ENCODE measurements at regions of chr4 and their contacts with region 1.

Region 1: DNA sequence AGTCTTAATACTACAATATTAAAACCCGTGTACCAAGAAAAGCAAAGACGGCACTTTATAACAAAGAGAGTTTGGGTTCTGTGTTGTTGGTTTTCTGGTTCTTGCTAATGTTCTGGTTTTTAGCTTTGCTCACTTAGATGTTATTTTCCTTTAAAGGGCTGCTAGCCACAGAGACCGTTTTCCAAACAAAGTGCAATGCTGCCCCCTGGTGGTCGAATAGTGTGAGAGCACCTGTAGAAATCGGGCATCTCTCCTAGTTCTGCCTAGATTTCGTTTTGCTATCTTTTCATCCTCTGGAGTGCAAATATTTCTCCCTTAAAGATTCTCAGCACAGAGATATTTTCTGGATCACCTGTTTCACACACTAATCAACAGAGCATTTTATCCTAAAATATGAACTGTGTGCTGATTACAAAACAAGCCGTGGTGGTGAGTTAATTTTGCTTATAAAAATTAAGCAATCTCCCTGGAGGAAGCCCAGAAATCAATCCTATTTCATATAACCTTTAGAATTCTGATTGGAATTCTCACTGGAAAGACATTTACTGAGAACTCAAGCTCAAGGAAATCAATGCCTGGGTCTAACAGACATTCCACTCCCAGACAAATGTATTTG is 334.5 kb upstream of the NOCT start:
- DNase-seq: peak; percentile 11
- ATAC-seq: peak; percentile 88
- H3K4me3 ChIP-seq: no peak overlapping the region
- H3K27ac ChIP-seq: no peak overlapping the region
- H3K4me1 ChIP-seq: no peaks in the 10 kb centered on the region
- H3K27me3 ChIP-seq: peaks cover 0 to 1% of the 10 kb centered on the region in 2 experiments; a peak in 1 of 4 replicates
- CTCF ChIP-seq: peak; percentile 80 to 94 (median 87)
- EP300 ChIP-seq: no peak
- POLR2A ChIP-seq: no peak
- RAD21 ChIP-seq: peak; percentile 96

Region 2: DNA sequence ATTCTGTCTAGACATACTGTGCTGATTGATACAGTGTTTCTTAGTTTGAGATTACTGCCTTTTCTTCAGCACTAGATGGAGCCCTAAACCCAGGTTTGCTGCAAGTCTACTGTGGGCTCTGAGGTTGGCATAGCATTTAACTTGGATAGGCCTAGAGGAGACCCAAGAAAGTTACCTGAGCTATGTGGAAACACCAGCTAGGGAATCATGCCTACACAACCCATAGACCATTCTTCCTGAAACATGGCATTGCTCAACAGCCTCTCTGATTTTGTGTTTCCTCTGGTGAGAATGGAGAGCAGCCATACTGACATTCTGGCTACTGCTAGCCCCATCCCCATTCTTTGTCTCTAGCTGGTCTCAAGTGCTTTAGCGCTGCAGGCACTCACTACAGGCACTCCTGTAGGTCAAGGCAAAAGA is 861.1 kb before region 1 on chr4:
- CTCF ChIA-PET with region 1: interaction called, 21 read pairs
- POLR2A ChIA-PET with region 1: no interaction called
- RAD21 ChIA-PET with region 1: interaction called, 35 read pairs
- SMC1A ChIA-PET with region 1: interaction called, 15 read pairs
- in situ Hi-C with region 1: loop called (anchors 10 kb)
- intact Hi-C with region 1: loop called (anchors 1 kb)
- DNase-seq: peak; percentile 1
- ATAC-seq: peak; percentile 97
- H3K4me3 ChIP-seq: no peak overlapping the region
- H3K27ac ChIP-seq: no peak overlapping the region
- H3K4me1 ChIP-seq: no peaks in the 10 kb centered on the region
- H3K27me3 ChIP-seq: no peaks in the 10 kb centered on the region
- CTCF ChIP-seq: peak; percentile 62 to 77 (median 66)
- EP300 ChIP-seq: no peak
- POLR2A ChIP-seq: no peak
- RAD21 ChIP-seq: peak; percentile 89

Region 3: DNA sequence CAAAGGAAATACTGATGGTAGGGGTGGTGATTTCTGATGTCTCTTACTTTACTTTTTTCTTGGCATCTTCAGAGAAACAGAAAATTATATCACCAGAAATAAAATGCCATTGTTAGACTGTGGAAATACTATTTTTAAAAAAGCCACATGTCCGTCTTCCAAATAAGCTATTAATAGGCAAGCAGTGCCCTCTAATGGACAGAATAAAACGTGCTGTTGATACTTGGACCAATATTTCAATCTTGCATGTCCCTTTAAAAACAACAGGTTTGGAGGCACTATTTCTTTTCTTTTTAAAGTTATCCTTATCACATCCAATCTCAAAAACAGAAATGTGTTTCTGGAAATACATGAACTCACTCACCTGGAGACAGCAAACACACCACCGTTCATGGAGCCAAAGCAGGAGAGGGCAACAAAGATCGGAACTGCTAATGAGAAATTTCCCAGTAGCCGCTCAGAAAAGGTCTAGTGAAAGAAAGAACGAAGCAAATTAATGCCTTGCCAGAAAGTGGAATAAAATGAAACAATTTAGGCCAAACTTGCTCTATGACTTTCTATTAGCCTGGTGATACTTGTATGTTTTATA is 498.2 kb before region 1 on chr4:
- CTCF ChIA-PET with region 1: interaction called, 27 read pairs
- POLR2A ChIA-PET with region 1: no interaction called
- RAD21 ChIA-PET with region 1: interaction called, 5 read pairs
- SMC1A ChIA-PET with region 1: interaction called, 5 read pairs
- in situ Hi-C with region 1: no loop called
- intact Hi-C with region 1: no loop called
- DNase-seq: no peak
- ATAC-seq: peak; percentile 61
- H3K4me3 ChIP-seq: no peak overlapping the region
- H3K27ac ChIP-seq: no peak overlapping the region
- H3K4me1 ChIP-seq: no peaks in the 10 kb centered on the region
- H3K27me3 ChIP-seq: no peaks in the 10 kb centered on the region
- CTCF ChIP-seq: peak; percentile 35 to 67 (median 59); a peak in 5 of 6 replicates
- EP300 ChIP-seq: no peak
- POLR2A ChIP-seq: no peak
- RAD21 ChIP-seq: peak; percentile 84

Region 4: DNA sequence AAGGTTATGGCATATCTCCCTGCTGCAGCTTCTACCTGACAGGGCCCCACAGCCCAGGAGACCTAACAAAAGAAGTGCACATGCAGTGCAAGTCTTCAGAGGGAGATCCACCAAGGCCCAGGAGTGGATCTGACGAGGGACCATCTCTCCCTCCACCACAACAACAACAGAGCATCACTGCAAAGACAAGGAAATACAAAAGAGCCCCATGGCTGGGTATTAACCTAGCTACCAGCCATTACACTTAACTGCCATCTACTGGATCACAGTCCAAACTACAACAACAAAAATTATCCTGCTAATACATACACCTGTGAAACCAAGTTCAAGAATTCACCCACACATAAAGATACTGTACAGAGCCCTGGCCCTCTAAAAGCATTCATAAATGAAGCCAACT is 158.7 kb before region 1 on chr4:
- CTCF ChIA-PET with region 1: interaction called, 25 read pairs
- POLR2A ChIA-PET with region 1: no interaction called
- RAD21 ChIA-PET with region 1: interaction called, 7 read pairs
- SMC1A ChIA-PET with region 1: interaction called, 18 read pairs
- in situ Hi-C with region 1: no loop called
- intact Hi-C with region 1: no loop called
- DNase-seq: no peak
- ATAC-seq: peak; percentile 85
- H3K4me3 ChIP-seq: no peak overlapping the region
- H3K27ac ChIP-seq: no peak overlapping the region
- H3K4me1 ChIP-seq: no peaks in the 10 kb centered on the region
- H3K27me3 ChIP-seq: no peaks in the 10 kb centered on the region
- CTCF ChIP-seq: peak; percentile 35 to 57 (median 52); a peak in 4 of 6 replicates
- EP300 ChIP-seq: no peak
- POLR2A ChIP-seq: no peak
- RAD21 ChIP-seq: peak; percentile 69

Region 5: DNA sequence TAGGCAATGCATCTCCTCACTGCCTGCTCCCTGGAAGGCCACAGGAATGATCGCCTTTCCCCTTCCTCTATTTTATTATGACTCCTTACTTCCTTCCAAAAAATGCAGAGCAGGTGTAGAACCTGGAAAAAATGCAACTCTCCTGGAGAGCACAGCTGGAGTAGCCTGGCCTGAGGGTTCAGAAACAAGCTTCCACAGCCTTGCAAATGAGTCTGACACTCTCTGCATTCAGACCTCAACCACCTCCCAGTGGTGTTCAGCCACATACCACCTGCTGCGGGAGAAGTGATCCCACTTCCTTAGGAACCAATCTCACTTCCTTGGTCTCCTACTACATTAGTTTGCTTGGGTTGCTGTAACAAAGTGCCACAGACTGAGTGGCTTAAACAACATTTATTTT is 33.7 kb before region 1 on chr4:
- CTCF ChIA-PET with region 1: interaction called, 5 read pairs
- POLR2A ChIA-PET with region 1: no interaction called
- RAD21 ChIA-PET with region 1: interaction called, 6 read pairs
- SMC1A ChIA-PET with region 1: interaction called, 11 read pairs
- in situ Hi-C with region 1: no loop called
- intact Hi-C with region 1: no loop called
- DNase-seq: no peak
- ATAC-seq: no peak
- H3K4me3 ChIP-seq: no peak overlapping the region
- H3K27ac ChIP-seq: no peak overlapping the region
- H3K4me1 ChIP-seq: no peaks in the 10 kb centered on the region
- H3K27me3 ChIP-seq: no peaks in the 10 kb centered on the region
- CTCF ChIP-seq: no peak
- EP300 ChIP-seq: no peak
- POLR2A ChIP-seq: no peak
- RAD21 ChIP-seq: no peak

Region 6: GRCh38 chr4:138669479-138670315 is 11.4 kb before region 1 on chr4:
- CTCF ChIA-PET with region 1: interaction called, 15 read pairs
- POLR2A ChIA-PET with region 1: interaction called, 4 read pairs
- RAD21 ChIA-PET with region 1: interaction called, 8 read pairs
- SMC1A ChIA-PET with region 1: interaction called, 31 read pairs
- in situ Hi-C with region 1: no loop called
- intact Hi-C with region 1: no loop called
- DNase-seq: no peak
- ATAC-seq: peak; percentile 60
- H3K4me3 ChIP-seq: no peak overlapping the region
- H3K27ac ChIP-seq: no peak overlapping the region
- H3K4me1 ChIP-seq: no peaks in the 10 kb centered on the region; the same call in 1 of the 2 replicates
- H3K27me3 ChIP-seq: peaks cover 0 to 2% of the 10 kb centered on the region in 2 experiments; a peak in 1 of 4 replicates
- CTCF ChIP-seq: no peak
- EP300 ChIP-seq: no peak; a peak in 1 of 4 replicates
- POLR2A ChIP-seq: no peak
- RAD21 ChIP-seq: no peak

Region 7: GRCh38 chr4:138919094-138919936 is 238.2 kb after region 1 on chr4:
- CTCF ChIA-PET with region 1: interaction called, 3 read pairs
- POLR2A ChIA-PET with region 1: no interaction called
- RAD21 ChIA-PET with region 1: interaction called, 3 read pairs
- SMC1A ChIA-PET with region 1: no interaction called
- in situ Hi-C with region 1: no loop called
- intact Hi-C with region 1: loop called (anchors 1 kb)
- DNase-seq: peak; percentile 11
- ATAC-seq: peak; percentile 98
- H3K4me3 ChIP-seq: no peak overlapping the region
- H3K27ac ChIP-seq: no peak overlapping the region
- H3K4me1 ChIP-seq: no peaks in the 10 kb centered on the region
- H3K27me3 ChIP-seq: no peaks in the 10 kb centered on the region
- CTCF ChIP-seq: peak; percentile 82 to 94 (median 88)
- EP300 ChIP-seq: no peak
- POLR2A ChIP-seq: no peak
- RAD21 ChIP-seq: peak; percentile 84

Measured in GM12878 (cell line).